Activated CD4-positive, alpha-beta memory T cell treated with anti-CD3 and anti-CD28 coated beads for 36 hours (primary cell): ENCODE measurements at regions of chr2 and their contacts with region 1.

Region 1: DNA sequence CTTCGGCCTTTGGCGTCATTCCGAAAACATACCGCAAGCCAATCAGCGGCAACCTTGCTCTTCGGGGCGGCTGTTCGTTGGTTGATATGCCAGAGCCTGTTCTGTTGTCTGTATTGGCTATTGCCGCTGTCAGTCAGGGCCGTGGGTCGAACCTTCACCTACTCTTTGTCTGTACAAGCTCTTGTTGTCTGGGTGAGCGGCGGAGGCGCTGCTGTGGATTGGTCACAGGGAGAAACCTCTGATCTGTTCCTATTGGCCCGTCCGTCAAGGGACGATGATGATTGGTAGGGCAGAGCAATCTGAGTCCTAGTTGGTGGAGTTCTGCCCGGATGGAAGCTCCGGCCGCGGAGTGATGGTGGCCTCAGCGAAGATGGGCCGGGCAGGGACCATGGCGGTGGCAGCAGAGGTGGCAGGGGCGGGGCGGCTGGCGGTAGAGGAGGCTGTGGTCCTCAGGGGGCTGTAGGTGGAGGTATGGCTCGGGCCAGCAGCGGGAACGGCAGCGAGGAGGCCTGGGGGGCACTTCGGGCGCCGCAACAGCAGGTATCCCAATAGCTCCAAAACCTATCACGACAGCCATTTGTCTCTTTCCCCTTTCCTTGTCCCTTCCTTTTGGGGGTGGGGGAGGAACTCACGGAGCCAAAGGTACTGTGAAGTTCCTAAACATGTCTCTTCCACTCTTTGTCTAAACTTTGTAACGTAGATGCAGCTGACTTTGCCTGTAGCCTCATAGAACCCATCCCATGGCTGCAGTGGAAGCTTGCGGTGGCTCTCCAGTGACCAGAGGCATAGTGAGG is at the start of gene WBP1:
- DNase-seq: peak; percentile 100
- H3K4me3 Mint-ChIP-seq: peak within 1 kb of the TSS; percentile 87
- H3K27ac Mint-ChIP-seq: peak within 1 kb of the TSS; percentile 99
- H3K4me1 Mint-ChIP-seq: peaks cover 55% of the 10 kb centered on the region
- H3K27me3 Mint-ChIP-seq: peaks cover 2% of the 10 kb centered on the region
- total RNA-seq, gene WBP1: 32.9 to 35.9 TPM

Region 2: DNA sequence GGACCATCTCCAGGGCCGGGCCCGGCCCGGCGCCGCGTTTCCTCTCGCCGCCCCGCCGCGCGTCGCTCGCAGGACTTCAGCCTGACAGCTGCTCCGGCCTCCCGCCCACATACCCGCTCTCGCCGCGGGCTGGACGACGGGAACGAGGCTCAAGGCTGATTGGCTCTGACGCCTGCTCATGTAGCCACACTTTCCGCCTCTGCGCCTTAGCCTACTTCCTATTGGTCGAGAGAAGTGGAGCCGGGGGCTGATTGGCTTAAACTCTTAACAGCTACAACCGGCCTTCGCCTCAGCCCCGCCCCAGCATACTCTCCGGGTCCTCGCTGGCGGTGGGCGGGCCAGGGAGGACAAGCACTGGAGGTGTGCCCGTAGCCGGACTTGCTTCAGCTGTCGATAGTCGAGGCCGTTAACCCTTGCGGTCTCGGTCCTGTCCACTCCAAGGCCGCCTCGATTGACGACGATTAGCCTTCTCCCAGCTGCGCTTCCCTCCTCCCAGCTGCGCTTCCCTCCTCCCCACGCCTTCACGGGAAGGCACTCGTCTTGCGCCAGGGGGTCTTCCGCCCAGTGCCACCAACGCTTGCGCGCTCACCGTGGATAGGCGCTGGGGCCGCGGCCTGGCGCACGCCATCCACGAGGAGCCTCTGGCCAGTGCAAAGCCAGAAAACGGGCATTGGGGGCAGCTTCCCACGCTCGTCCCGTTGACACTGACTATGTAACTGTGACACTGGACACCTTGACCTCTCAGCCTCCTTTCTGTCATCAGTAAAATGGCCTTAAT is 1225.0 kb before region 1 on chr2 and contains the start of gene PRADC1:
- CTCF ChIA-PET with region 1: no interaction called
- POLR2A ChIA-PET with region 1: no interaction called
- intact Hi-C with region 1: loop called (anchors 10 kb)
- DNase-seq: peak; percentile 97
- H3K4me3 Mint-ChIP-seq: peak within 1 kb of the TSS; percentile 87
- H3K27ac Mint-ChIP-seq: peak within 1 kb of the TSS; percentile 80
- H3K4me1 Mint-ChIP-seq: peaks cover 29% of the 10 kb centered on the region
- H3K27me3 Mint-ChIP-seq: peaks cover 1% of the 10 kb centered on the region
- total RNA-seq, gene PRADC1: 12.9 to 13.6 TPM

Region 3: DNA sequence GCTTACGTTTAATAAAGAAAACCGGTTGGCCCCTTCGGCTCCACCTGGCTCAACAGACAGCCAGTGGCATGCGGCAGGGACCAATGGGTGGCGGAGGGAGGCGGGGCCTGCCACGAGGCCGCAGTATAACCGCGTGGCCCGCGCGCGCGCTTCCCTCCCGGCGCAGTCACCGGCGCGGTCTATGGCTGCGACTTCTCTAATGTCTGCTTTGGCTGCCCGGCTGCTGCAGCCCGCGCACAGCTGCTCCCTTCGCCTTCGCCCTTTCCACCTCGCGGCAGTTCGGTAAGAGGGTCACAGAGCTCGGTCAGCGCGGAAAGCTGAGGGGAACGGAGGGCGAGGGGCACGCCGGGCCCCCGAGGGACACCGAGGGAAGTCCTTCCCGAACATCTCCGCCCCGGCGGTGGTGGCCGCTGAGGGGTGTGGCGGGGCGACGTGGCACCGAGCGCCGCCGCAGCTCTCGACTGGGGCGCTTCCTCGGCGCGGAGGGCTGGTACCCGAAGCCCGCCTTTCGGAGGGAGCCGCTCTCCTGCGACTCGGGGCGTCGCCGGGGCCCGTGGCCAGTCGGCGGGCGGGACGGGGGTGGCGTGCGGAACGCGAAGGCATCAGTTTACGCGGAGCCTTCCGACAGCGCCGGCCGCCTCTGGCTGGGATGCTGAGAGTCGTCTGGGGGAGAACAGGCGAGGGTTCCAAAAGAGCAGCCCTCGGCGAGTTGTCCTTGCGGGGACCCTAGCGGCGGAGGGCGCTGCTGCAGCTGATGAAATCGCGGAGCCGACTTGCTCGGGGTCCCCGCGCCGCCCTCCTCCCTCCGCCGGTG is 259.7 kb before region 1 on chr2 and contains the start of gene MTHFD2:
- CTCF ChIA-PET with region 1: no interaction called
- POLR2A ChIA-PET with region 1: no interaction called
- intact Hi-C with region 1: loop called (anchors 1 kb)
- DNase-seq: peak; percentile 95
- H3K4me3 Mint-ChIP-seq: peak within 1 kb of the TSS; percentile 99
- H3K27ac Mint-ChIP-seq: peak within 1 kb of the TSS; percentile 100
- H3K4me1 Mint-ChIP-seq: peaks cover 39% of the 10 kb centered on the region
- H3K27me3 Mint-ChIP-seq: peaks cover 2% of the 10 kb centered on the region
- total RNA-seq, gene MTHFD2: 518 to 525 TPM

Region 4: DNA sequence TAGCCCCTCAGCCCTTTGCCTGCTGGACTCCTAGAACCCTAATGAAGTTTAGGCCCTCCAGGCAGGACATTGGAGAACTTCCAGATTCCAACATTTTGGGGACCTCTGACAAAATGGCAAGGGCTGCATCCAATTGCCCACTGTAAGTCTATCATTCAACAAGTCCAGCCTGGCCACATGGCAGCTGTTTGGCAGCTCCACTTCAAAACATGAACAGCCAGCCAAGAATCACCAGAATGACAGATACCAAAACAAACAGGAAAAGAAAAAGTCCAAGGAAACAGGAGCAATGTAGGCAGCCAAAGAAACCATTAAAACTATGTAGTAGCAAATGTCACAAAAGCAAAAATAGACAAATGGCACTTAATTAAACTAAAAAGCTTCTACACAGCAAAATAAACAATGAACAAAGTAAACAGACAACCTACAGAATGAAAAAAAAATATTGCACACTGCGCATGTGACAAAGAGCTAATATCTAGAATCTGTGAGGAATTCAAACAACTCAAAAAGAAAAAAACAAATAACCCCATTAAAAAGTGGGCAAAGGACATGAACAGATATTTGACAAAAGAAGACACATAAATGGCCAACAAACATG is 140.5 kb before region 1 on chr2:
- CTCF ChIA-PET with region 1: no interaction called
- POLR2A ChIA-PET with region 1: no interaction called
- intact Hi-C with region 1: no loop called
- DNase-seq: no peak
- H3K4me3 Mint-ChIP-seq: no peak overlapping the region
- H3K27ac Mint-ChIP-seq: no peak overlapping the region
- H3K4me1 Mint-ChIP-seq: no peaks in the 10 kb centered on the region
- H3K27me3 Mint-ChIP-seq: no peaks in the 10 kb centered on the region

Region 5: GRCh38 chr2:74421221-74421870 is 37.0 kb before region 1 on chr2 and contains the starts of genes C2orf81 and WDR54:
- CTCF ChIA-PET with region 1: interaction called, 10 read pairs
- POLR2A ChIA-PET with region 1: interaction called, 10 read pairs
- intact Hi-C with region 1: loop called (anchors 1 kb)
- DNase-seq: peak; percentile 96
- H3K4me3 Mint-ChIP-seq: peak within 1 kb of the TSS; percentile 95
- H3K27ac Mint-ChIP-seq: peak within 1 kb of the TSS; percentile 92
- H3K4me1 Mint-ChIP-seq: peaks cover 21% of the 10 kb centered on the region
- H3K27me3 Mint-ChIP-seq: no peaks in the 10 kb centered on the region
- total RNA-seq, gene C2orf81: 2.4 to 2.8 TPM
- total RNA-seq, gene WDR54: 101 TPM

Region 6: GRCh38 chr2:74472086-74472944 is 14.0 kb after region 1 on chr2 and contains the start of gene MRPL53:
- CTCF ChIA-PET with region 1: interaction called, 11 read pairs
- POLR2A ChIA-PET with region 1: interaction called, 20 read pairs
- intact Hi-C with region 1: loop called (anchors 1 kb)
- DNase-seq: peak; percentile 96
- H3K4me3 Mint-ChIP-seq: peak within 1 kb of the TSS; percentile 96
- H3K27ac Mint-ChIP-seq: peak within 1 kb of the TSS; percentile 96
- H3K4me1 Mint-ChIP-seq: peaks cover 19% of the 10 kb centered on the region
- H3K27me3 Mint-ChIP-seq: no peaks in the 10 kb centered on the region
- total RNA-seq, gene MRPL53: 117 to 121 TPM

Region 7: DNA sequence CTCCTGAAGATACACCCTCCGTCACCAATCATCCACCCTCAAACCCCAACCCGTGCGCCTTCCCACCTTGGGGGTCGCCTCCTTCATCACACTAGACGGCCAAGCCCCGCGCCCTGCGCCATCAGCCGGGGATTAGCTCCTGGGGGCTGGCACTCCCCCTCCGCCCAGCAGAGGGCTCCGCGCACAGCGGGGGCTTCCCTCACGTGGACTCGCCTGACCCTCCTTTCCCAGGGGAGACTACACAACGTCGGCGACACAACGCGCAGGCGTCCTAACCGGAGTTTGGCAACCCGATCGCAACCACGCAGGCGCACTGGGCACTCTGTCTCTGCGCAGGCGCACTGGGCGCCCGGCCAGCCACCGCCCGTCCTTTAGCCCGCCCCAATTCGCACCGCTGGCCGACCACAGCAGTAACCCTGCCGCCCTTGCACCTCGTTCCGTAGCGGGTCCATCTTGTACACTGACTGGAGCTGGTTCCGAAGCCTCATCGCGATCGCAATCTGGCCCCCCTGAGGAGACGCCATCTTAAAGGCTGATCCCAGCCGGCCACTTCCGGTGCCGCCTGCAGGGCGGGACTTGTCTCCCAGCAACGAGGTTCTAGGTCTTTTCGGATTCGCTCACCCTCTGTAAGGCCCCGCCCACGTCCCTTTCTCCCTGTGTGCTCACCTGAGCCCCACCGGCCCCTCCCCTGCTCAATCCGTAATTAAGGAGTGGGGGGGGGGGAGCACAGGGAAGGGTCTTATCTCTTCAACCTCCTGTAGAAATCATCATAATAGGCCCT is 49.0 kb after region 1 on chr2 and contains the start of gene PCGF1:
- CTCF ChIA-PET with region 1: no interaction called
- POLR2A ChIA-PET with region 1: no interaction called
- intact Hi-C with region 1: loop called (anchors 1 kb)
- DNase-seq: peak; percentile 99
- H3K4me3 Mint-ChIP-seq: peak within 1 kb of the TSS; percentile 91
- H3K27ac Mint-ChIP-seq: peak within 1 kb of the TSS; percentile 98
- H3K4me1 Mint-ChIP-seq: peaks cover 48% of the 10 kb centered on the region
- H3K27me3 Mint-ChIP-seq: peaks cover 33% of the 10 kb centered on the region
- total RNA-seq, gene PCGF1: 22.6 to 26.0 TPM